IMR-90 (cell line): ENCODE measurements at regions of chr7 and their contacts with region 1.

Region 1: DNA sequence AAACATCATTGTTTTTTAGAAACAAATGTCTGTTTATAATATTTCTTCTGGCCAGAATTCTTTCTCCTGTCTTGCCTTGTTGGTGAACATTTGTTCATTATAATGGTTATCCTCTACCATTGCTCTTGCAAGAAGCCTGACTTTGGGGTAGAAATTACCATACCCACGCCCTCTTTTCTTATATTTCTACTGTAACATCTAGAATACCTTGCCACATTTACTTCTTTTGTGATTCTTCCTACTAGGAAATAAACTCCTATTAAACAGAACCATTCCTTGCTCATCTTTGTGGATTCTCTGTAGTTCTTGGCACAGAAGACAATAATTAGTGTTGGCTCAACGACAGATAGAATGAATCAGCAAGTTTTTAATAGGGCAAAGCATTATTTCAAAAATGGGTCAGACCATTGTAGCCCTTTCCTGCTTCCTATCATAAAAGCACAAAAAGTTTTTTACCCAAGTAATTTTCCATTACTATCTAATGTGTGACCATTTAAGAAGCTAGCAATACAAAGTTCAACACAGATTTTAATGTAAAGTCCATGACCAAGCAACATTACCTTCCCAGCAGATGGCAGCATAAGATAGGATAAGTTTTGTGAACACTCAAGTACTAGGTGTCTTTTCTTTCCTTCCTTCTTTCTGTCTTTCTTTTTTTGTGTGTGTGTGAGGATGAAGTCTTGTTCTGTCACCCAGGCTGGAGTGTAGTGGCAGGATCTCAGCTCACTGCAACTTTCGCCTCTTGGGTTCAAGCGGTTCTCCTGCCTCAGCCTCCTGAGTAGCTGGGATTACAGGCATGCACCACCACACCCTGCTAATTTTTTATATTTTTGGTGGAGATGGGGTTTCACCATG is 270.4 kb downstream of the HGF start:
- DNase-seq: peak; percentile 89
- ATAC-seq: peak; percentile 78
- H3K4me3 ChIP-seq: no peak overlapping the region
- H3K27ac ChIP-seq: peak overlapping the region; percentile 63; the same call in 1 of the 2 replicates
- H3K4me1 ChIP-seq: no peaks in the 10 kb centered on the region
- H3K27me3 ChIP-seq: no peaks in the 10 kb centered on the region
- CTCF ChIP-seq: peak; percentile 76
- POLR2A ChIP-seq: no peak
- RAD21 ChIP-seq: peak; percentile 88

Region 2: GRCh38 chr7:81618396-81619014 is 119.0 kb after region 1 on chr7:
- CTCF ChIA-PET with region 1: interaction called, 3 read pairs
- POLR2A ChIA-PET with region 1: no interaction called
- dilution Hi-C with region 1: no loop called
- in situ Hi-C with region 1: no loop called
- intact Hi-C with region 1: loop called (anchors 5 kb)
- DNase-seq: peak; percentile 98
- ATAC-seq: peak; percentile 86
- H3K4me3 ChIP-seq: no peak overlapping the region
- H3K27ac ChIP-seq: peak overlapping the region; percentile 47; the same call in 1 of the 2 replicates
- H3K4me1 ChIP-seq: peaks cover 11% of the 10 kb centered on the region; the same call in 1 of the 2 replicates
- H3K27me3 ChIP-seq: no peaks in the 10 kb centered on the region
- CTCF ChIP-seq: no peak
- POLR2A ChIP-seq: no peak
- RAD21 ChIP-seq: no peak

Region 3: DNA sequence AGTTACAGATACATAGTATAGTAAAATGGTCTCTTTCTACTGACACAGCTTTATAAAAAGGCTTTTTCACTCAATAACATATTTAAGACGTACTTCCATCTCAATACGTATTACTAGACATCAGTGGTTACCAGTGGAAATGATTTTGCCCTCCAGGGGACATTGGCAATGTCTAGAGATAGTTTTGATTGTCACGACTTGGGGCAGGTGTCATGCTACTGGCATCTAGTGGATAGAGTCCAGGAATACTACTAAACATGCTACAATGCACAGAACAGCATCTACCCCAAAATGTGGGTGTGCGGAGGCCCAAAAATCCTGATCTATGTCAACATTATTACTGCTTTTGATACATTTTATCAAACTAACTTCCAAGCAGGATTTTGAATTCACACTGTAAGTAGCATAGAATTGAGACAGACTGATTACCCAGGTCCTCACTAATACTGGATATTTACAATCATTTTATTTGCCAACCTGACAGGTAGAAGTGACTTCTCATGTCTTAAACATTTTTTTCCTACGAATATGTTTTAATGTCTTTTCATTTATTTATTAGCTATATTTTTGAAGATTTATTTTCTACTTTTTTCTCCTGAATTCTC is 216.6 kb after region 1 on chr7:
- CTCF ChIA-PET with region 1: interaction called, 3 read pairs
- POLR2A ChIA-PET with region 1: no interaction called
- dilution Hi-C with region 1: no loop called
- in situ Hi-C with region 1: loop called (anchors 5 kb)
- intact Hi-C with region 1: loop called (anchors 1 kb)
- DNase-seq: peak; percentile 53
- ATAC-seq: peak; percentile 54
- H3K4me3 ChIP-seq: no peak overlapping the region
- H3K27ac ChIP-seq: no peak overlapping the region
- H3K4me1 ChIP-seq: no peaks in the 10 kb centered on the region
- H3K27me3 ChIP-seq: no peaks in the 10 kb centered on the region
- CTCF ChIP-seq: peak; percentile 48
- POLR2A ChIP-seq: no peak
- RAD21 ChIP-seq: peak; percentile 69

Region 4: DNA sequence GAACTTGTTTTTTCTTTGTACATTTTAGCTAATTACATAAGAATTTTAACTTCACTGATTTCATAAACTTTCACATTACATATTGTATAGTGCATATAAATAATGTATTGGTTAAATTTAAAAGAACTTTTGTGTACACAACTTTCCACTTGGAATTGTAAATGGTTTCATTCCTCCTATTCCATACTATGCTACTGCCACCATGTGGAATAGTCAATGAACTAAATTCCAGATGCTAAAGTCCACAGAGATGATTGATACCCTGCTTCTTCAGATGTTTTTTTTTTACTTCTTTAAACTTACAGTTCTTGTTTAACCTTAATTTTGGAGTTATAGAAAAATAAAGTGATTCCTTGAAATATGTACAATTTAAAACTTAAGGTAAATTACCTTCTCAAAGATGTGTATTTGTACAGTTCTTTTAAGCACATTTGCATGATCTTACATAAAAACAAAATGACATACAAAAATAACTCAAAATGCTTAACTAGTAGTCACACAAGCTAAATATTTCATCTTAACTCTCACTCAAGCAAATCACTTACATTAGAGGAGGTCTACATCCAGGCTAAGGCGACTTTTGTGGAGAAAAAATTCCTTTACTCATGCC is 518.0 kb after region 1 on chr7:
- CTCF ChIA-PET with region 1: interaction called, 20 read pairs
- POLR2A ChIA-PET with region 1: no interaction called
- dilution Hi-C with region 1: no loop called
- in situ Hi-C with region 1: loop called (anchors 5 kb)
- intact Hi-C with region 1: loop called (anchors 1 kb)
- DNase-seq: peak; percentile 65
- ATAC-seq: peak; percentile 71
- H3K4me3 ChIP-seq: no peak overlapping the region
- H3K27ac ChIP-seq: no peak overlapping the region
- H3K4me1 ChIP-seq: peaks cover 4% of the 10 kb centered on the region
- H3K27me3 ChIP-seq: no peaks in the 10 kb centered on the region
- CTCF ChIP-seq: peak; percentile 75
- POLR2A ChIP-seq: no peak
- RAD21 ChIP-seq: peak; percentile 82

Region 5: GRCh38 chr7:82468435-82468834 is 968.9 kb after region 1 on chr7:
- CTCF ChIA-PET with region 1: no interaction called
- POLR2A ChIA-PET with region 1: no interaction called
- dilution Hi-C with region 1: no loop called
- in situ Hi-C with region 1: loop called (anchors 25 kb)
- intact Hi-C with region 1: no loop called
- DNase-seq: no peak
- ATAC-seq: no peak
- H3K4me3 ChIP-seq: no peak overlapping the region
- H3K27ac ChIP-seq: no peak overlapping the region
- H3K4me1 ChIP-seq: no peaks in the 10 kb centered on the region
- H3K27me3 ChIP-seq: no peaks in the 10 kb centered on the region
- CTCF ChIP-seq: no peak
- POLR2A ChIP-seq: no peak
- RAD21 ChIP-seq: no peak

Region 6: GRCh38 chr7:82729172-82730030 is 1229.9 kb after region 1 on chr7:
- CTCF ChIA-PET with region 1: no interaction called
- POLR2A ChIA-PET with region 1: no interaction called
- dilution Hi-C with region 1: no loop called
- in situ Hi-C with region 1: loop called (anchors 5 kb)
- intact Hi-C with region 1: loop called (anchors 1 kb)
- DNase-seq: peak; percentile 60
- ATAC-seq: peak; percentile 76
- H3K4me3 ChIP-seq: no peak overlapping the region
- H3K27ac ChIP-seq: no peak overlapping the region
- H3K4me1 ChIP-seq: 0 out of 2 replicates have a peak, but pooled peaks cover 2% of the 10 kb centered on the region
- H3K27me3 ChIP-seq: no peaks in the 10 kb centered on the region
- CTCF ChIP-seq: peak; percentile 86
- POLR2A ChIP-seq: no peak
- RAD21 ChIP-seq: peak; percentile 83